ENCODE measurements at regions of chr17 and their contacts with region 1.

Region 1: GRCh38 chr17:73237714-73238113 is 24.0 kb downstream of the CPSF4L start:
- DNase-seq: no peak
- H3K4me3 ChIP-seq: no peak overlapping the region
- H3K27me3 ChIP-seq: no peaks in the 10 kb centered on the region
- CTCF ChIP-seq: no peak

Region 2: DNA sequence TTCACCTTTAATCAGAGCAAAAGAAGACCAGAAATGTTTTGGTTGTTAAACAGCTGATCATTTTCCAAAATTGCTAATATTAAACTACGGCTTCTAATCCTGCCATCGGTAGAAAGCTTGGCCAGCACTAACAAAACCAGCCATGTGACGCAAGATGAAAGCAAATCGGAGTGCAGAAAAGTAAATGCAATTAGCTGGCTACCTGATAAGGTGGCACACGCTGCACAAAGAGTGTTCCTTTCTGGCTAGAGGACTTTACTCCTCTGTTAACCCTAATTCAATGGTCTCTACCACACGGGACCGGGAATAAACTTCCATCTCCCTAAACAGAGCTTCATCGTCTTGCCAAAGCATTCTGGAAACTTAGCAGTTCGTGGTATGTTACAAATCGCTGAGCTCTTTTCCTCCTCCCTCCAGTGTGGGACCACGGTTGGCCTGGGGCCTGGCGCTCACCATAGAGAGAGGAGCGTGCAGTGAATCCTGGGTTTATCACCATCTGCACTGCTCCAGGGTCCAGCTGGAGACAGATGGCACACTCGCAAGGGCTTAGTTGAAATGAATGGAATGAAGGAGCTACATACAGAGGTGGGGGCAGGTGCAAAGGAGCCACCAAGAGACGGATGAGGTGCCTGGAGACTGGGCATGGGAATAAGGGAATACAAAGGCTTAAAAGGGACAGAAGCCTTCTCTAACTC is 55.0 kb before region 1 on chr17:
- CTCF ChIA-PET with region 1: no interaction called
- POLR2A ChIA-PET with region 1: no interaction called
- DNase-seq: no peak
- H3K4me3 ChIP-seq: no peak overlapping the region
- H3K27me3 ChIP-seq: no peaks in the 10 kb centered on the region
- CTCF ChIP-seq: no peak

Region 3: DNA sequence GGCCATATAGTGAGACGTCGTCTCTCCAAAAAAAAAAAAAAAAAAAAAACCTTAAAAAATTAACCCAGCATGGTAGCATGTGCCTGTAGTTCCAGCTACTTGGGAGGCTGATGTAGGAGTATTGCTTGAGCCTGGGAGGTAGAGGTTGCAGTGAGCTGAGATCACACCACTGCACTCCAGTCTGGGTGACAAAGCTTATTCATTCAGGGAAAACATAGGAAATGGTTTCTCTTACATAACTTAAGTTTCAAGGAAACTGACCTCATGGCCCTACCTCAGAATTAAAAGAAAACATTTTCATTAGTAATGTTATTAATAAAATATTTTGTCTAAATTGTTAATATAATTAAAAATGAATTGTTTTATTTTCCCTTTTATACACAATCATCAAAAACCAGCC is 13.5 kb before region 1 on chr17:
- CTCF ChIA-PET with region 1: no interaction called
- POLR2A ChIA-PET with region 1: no interaction called
- DNase-seq: no peak
- H3K4me3 ChIP-seq: no peak overlapping the region
- H3K27me3 ChIP-seq: no peaks in the 10 kb centered on the region
- CTCF ChIP-seq: no peak

Region 4: DNA sequence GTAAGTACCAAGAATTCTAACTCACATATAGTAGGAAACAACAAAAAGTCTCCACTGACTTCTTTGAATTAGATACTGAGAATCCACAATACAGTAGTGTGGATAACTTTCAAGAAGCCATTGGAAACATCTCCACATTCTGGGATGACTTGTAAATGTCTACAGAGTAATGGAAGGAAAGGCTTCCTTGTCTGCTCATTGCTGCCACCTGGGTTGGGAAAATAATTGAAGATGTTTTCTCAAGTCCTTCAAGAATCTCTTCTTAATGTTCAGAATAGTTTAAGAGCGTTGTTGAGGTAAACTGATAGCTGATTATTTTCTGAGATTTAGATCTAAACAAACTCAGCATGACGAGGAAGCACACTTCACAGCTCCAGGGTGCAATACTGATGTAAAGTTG is 10.0 kb after region 1 on chr17:
- CTCF ChIA-PET with region 1: interaction called, 15 read pairs
- POLR2A ChIA-PET with region 1: interaction called, 3 read pairs
- DNase-seq: no peak
- H3K4me3 ChIP-seq: no peak overlapping the region
- H3K27me3 ChIP-seq: no peaks in the 10 kb centered on the region; the same call in 1 of the 2 replicates
- CTCF ChIP-seq: peak; percentile 37

Region 5: DNA sequence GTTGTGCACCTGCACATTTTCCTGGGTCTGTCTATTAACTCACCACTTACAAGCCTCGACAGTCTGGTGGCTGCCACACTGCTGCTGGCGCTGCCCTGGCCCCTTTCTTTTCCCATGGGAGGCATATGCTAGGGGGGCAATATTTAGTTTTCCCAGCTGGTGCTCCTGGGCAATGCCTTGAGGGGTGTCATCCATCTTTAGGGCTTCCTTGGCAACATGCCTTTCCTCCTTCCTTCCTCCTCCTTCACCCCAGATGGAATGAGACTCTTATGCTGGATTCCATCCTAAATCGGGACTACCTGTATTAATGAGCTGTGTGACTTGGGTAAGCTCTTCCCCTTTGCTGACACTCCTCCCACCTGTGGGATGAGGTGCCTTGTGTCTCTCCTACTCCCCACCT is 138.9 kb after region 1 on chr17:
- CTCF ChIA-PET with region 1: no interaction called
- POLR2A ChIA-PET with region 1: no interaction called
- DNase-seq: no peak
- H3K4me3 ChIP-seq: no peak overlapping the region
- H3K27me3 ChIP-seq: peaks cover 9% of the 10 kb centered on the region
- CTCF ChIP-seq: no peak